Esophagus squamous epithelium (tissue), 5 donors: ENCODE measurements at regions of chr3 and their contacts with region 1.

Region 1: GRCh38 chr3:58324391-58325390 is 8.0 kb upstream of the PXK start:
- DNase-seq: no peak
- H3K4me3 ChIP-seq: no peak overlapping the region
- H3K27ac ChIP-seq: peak overlapping the region in 1 of 4 donors; percentile 36
- H3K4me1 ChIP-seq: peaks cover 0 to 14% (median 10%) of the 10 kb centered on the region in 3 donors
- H3K27me3 ChIP-seq: no peaks in the 10 kb centered on the region
- CTCF ChIP-seq: no peak
- POLR2A ChIP-seq: no peak

Region 2: GRCh38 chr3:58414538-58415197 is 90.0 kb after region 1 on chr3:
- intact Hi-C with region 1: loop called (anchors 5 kb)
- DNase-seq: no peak
- H3K4me3 ChIP-seq: no peak overlapping the region
- H3K27ac ChIP-seq: no peak overlapping the region
- H3K4me1 ChIP-seq: peaks cover 0 to 13% (median 5%) of the 10 kb centered on the region in 3 donors
- H3K27me3 ChIP-seq: no peaks in the 10 kb centered on the region
- CTCF ChIP-seq: peak; percentile 66 to 89 (median 82)
- POLR2A ChIP-seq: no peak

Region 3: GRCh38 chr3:58471025-58471887 is 146.6 kb after region 1 on chr3:
- intact Hi-C with region 1: no loop called
- DNase-seq: no peak
- H3K4me3 ChIP-seq: peak overlapping the region in 1 of 4 donors; percentile 21
- H3K27ac ChIP-seq: peak overlapping the region; percentile 71 to 86 (median 81)
- H3K4me1 ChIP-seq: peaks cover 13 to 43% (median 26%) of the 10 kb centered on the region in 3 donors
- H3K27me3 ChIP-seq: no peaks in the 10 kb centered on the region
- CTCF ChIP-seq: no peak
- POLR2A ChIP-seq: no peak